Activated CD8-positive, alpha-beta T cell treated with anti-CD3 and anti-CD28 coated beads, Interleukin-2, amount 10 ng/mL, durations not matched to agents 7 days and 5 days (primary cell): ENCODE measurements at regions of chr1 and their contacts with region 1.

Region 1: GRCh38 chr1:46527474-46528296 is 23.8 kb downstream of the KNCN start:
- DNase-seq: peak; percentile 86
- ATAC-seq: peak; percentile 67
- H3K4me3 Mint-ChIP-seq: no peak overlapping the region
- H3K27ac Mint-ChIP-seq: no peak overlapping the region
- H3K4me1 Mint-ChIP-seq: peaks cover 20% of the 10 kb centered on the region
- H3K27me3 Mint-ChIP-seq: peaks cover 18% of the 10 kb centered on the region

Region 2: GRCh38 chr1:46477153-46477929 is 50.3 kb before region 1 on chr1:
- CTCF ChIA-PET with region 1: interaction called, 32 read pairs
- POLR2A ChIA-PET with region 1: interaction called, 4 read pairs
- DNase-seq: peak; percentile 82
- ATAC-seq: peak; percentile 73
- H3K4me3 Mint-ChIP-seq: no peak overlapping the region
- H3K27ac Mint-ChIP-seq: no peak overlapping the region
- H3K4me1 Mint-ChIP-seq: no peaks in the 10 kb centered on the region
- H3K27me3 Mint-ChIP-seq: peaks cover 36% of the 10 kb centered on the region

Region 3: DNA sequence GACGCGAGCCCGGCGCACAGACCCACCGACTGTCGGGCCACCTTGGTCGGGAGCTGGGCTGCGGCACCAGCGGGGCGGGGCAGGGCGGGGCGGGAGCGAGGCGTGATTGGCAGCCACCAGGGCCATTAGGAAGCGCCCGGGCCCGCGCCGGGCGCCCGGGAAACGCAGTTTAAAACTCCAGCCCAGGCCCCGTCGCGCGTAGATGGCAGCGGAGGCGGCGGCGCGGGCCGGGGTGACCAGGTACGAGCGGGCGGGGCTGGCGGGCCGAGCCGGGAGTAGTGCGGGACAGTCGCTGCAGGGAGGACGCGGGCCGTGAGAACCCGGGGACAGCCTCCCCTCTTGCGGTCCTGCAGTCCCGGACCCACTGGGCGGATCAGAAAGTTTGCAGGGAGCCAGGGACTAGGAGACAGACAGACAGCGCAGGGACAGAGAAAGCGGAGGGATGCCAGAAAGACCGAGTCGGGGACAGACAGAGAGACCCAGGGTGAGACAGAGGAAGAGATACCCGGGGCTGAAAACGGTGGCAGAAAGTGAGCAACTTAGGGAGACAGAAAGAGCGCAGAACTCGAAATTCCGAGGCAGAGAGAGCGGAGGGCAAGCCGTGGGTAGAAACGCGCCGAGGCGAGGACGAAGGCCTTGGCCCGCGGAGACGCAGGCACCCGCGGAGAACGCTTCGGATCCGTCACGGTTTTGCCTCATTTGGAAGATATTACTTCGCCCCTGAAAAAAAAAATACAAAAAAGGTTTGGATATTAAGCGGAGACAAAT is 37.9 kb before region 1 on chr1 and contains the start of gene DMBX1:
- CTCF ChIA-PET with region 1: interaction called, 18 read pairs
- POLR2A ChIA-PET with region 1: no interaction called
- DNase-seq: peak; percentile 57
- ATAC-seq: peak; percentile 65
- H3K4me3 Mint-ChIP-seq: peak within 1 kb of the TSS; percentile 63
- H3K27ac Mint-ChIP-seq: no peak within 1 kb of the TSS
- H3K4me1 Mint-ChIP-seq: peaks cover 15% of the 10 kb centered on the region
- H3K27me3 Mint-ChIP-seq: peaks cover 86% of the 10 kb centered on the region
- total RNA-seq, gene DMBX1: 0.08 TPM in 1 of 2 experiments, not detected in the other

Region 4: GRCh38 chr1:46547481-46548383 is 20.0 kb after region 1 on chr1:
- CTCF ChIA-PET with region 1: interaction called, 14 read pairs
- POLR2A ChIA-PET with region 1: no interaction called
- DNase-seq: peak; percentile 35
- ATAC-seq: no peak
- H3K4me3 Mint-ChIP-seq: no peak overlapping the region
- H3K27ac Mint-ChIP-seq: no peak overlapping the region
- H3K4me1 Mint-ChIP-seq: peaks cover 37% of the 10 kb centered on the region
- H3K27me3 Mint-ChIP-seq: peaks cover 34% of the 10 kb centered on the region

Region 5: DNA sequence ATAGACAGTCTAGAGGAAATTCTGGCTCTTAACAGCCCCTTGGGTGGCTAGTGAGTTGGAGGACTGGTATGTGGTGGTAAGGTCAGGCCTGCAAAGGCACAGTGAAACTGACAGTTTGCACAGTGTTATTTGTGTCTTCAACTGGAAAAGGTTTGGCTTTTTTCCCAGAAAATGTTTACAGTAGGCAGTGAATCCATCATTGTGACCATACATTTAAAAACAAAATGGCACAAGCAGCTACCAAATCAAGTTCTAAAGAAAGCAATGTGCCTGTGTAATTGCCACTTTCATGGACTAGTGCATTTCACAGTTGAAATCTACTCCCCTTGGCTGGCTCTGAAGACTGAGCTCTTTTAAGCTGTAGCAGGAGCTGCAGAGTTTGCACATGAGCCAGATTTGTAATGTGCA is 115.7 kb after region 1 on chr1:
- CTCF ChIA-PET with region 1: no interaction called
- POLR2A ChIA-PET with region 1: no interaction called
- DNase-seq: no peak
- ATAC-seq: no peak
- H3K4me3 Mint-ChIP-seq: no peak overlapping the region
- H3K27ac Mint-ChIP-seq: no peak overlapping the region
- H3K4me1 Mint-ChIP-seq: no peaks in the 10 kb centered on the region
- H3K27me3 Mint-ChIP-seq: no peaks in the 10 kb centered on the region

Region 6: GRCh38 chr1:46653405-46653958 is 125.8 kb after region 1 on chr1:
- CTCF ChIA-PET with region 1: no interaction called
- POLR2A ChIA-PET with region 1: no interaction called
- DNase-seq: no peak
- ATAC-seq: no peak
- H3K4me3 Mint-ChIP-seq: no peak overlapping the region
- H3K27ac Mint-ChIP-seq: no peak overlapping the region
- H3K4me1 Mint-ChIP-seq: peaks cover 4% of the 10 kb centered on the region
- H3K27me3 Mint-ChIP-seq: no peaks in the 10 kb centered on the region

Region 7: DNA sequence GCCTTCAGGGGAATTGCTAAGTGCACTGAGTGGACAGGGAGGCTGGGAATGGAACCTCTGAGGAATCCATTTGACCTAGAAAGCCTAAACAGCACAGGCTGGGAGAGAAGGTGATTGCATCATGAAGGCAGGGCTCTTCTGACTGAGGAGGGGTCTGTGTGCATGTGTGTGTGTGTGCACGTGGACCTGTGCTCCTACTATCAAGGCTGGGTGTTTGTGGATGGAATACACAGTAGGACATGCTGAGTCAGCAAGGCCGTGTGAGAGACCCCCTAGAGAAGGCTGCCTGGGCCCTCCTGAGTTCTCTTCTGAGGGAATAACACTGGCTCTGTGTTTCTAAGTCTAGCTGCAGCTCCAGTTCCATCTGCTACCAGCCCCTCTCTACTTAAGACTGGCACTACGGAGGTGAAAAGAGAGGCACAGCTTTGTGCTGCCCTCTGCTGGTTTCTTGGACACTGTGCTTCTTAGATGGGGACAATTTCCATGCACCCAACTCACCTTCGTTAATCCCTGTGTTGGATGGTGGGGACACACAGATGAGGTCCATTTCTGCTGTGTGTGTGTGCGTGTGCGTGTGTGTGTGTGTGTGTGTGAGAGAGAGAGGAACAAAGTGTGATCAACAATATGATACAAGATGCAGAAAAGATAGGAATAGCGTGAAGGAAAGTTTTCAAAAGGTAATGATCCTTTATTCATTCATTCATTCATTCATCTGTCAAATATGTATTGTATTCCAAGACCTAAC is 197.5 kb after region 1 on chr1:
- CTCF ChIA-PET with region 1: interaction called, 35 read pairs
- POLR2A ChIA-PET with region 1: no interaction called
- DNase-seq: peak; percentile 84
- ATAC-seq: peak; percentile 98
- H3K4me3 Mint-ChIP-seq: no peak overlapping the region
- H3K27ac Mint-ChIP-seq: no peak overlapping the region
- H3K4me1 Mint-ChIP-seq: peaks cover 5% of the 10 kb centered on the region
- H3K27me3 Mint-ChIP-seq: peaks cover 23% of the 10 kb centered on the region